Posterior cingulate gyrus (tissue), 11 donors: ENCODE measurements at regions of chr1 and their contacts with region 1.

Region 1: DNA sequence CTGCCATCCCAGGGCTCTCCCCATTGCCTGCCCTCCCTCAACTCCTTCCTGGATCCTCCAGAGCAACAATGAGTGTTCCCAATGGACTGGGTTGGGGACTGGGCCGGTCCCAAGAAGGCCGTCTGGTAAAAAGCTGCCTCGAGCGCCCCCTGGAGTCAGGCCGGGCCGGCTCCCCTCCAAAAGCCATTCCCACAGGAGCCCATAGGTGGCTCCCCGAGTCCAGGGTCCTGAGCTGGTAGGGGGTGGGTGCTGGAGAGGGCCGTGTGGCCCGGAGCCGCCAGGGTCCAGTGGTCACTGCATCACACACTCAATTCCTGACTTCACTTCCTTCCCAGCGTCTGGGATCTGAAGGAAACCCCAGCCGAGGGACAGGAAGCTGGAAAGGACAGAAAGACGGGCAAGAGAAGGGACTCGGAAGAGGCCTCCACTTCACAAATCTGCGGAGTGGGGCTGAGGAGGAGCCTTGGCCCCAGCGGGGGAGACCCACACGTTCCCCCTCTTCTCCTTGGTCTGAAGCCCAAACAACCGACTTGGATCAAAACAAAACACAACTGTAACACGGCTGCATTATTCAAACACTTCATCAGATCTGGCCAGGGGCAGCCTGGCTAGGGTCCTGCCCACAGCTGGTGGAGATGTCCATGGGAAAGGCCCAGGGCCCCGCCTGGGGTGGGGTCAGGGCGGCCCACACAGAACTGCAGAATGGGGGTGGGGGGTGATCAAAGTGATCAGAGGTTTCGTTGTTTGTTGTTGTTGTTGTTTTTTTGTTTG is 10.9 kb upstream of the ALDH4A1 start:
- DNase-seq: peak; percentile 72 to 97 (median 86)

Region 2: GRCh38 chr1:18883636-18884418 is 29.4 kb before region 1 on chr1:
- intact Hi-C with region 1: loop called (anchors 2 kb)
- DNase-seq: peak; percentile 63 to 97 (median 88)

Region 3: DNA sequence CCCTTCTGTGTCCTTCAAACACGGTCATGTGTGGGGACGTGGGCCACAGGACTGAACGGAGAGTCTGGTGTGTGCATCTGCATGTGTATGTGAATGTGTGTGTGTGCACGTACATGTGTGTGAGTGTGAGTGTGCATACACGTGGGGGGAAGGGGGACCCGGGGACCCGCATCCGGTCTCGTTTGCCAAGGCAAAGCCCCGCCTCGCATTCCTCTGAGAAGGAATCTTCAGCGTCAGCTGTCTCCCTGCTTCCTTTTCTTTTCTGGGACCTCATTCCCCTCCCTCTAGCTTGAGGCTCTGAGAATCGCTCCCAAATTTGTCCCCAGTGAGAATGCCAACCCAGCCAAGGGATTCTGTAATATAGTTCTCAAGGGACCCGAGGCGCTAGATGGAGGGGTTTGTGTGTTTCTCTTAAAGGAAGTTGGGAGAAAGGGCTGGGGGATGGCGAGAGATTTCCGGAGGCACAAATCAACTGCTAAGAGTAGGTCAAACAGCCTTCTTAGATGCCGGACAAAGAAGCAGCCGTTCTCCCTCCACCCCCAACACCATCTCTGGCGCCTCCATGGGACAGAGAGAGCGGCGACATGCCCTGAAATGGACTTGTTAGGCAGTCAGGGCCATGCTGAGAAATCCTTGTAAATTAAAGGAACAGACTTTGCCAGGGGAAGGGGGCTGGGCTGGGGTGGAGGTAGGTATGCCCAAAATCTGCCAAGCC is 36.6 kb after region 1 on chr1:
- intact Hi-C with region 1: loop called (anchors 5 kb)
- DNase-seq: peak in 7 of 10 donors; percentile 55 to 95 (median 71)

Region 4: DNA sequence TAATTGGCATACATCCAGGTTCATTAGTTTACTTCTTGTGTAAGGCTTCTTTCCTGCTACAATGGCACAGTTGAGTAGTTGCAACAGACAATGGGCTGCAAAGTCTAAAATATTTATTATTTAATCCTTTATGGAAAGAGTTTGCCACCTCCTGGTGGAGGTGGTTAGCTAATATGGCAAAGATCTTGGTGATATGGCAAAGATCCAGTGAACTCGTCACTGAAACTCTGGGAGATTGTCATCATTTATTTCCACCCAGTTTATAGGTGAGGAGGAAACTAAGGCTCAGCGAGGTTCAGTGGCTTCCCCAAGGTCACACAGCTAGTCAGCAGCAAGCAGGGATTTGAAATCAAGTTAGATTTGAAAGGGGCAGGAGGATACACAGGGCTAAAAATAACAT is 59.3 kb after region 1 on chr1:
- intact Hi-C with region 1: loop called (anchors 5 kb)
- DNase-seq: no peak